Mammary epithelial cell (primary cell): ENCODE measurements at regions of chr12 and their contacts with region 1.

Region 1: GRCh38 chr12:4276524-4277204 is 3.1 kb downstream of the CCND2 start:
- DNase-seq: peak; percentile 76
- H3K4me3 ChIP-seq: peak overlapping the region; percentile 87 to 100 (median 94)
- H3K27ac ChIP-seq: peak overlapping the region; percentile 94
- H3K4me1 ChIP-seq: peaks cover 40% of the 10 kb centered on the region
- H3K27me3 ChIP-seq: no peaks in the 10 kb centered on the region
- CTCF ChIP-seq: peak; percentile 81 to 96

Region 2: DNA sequence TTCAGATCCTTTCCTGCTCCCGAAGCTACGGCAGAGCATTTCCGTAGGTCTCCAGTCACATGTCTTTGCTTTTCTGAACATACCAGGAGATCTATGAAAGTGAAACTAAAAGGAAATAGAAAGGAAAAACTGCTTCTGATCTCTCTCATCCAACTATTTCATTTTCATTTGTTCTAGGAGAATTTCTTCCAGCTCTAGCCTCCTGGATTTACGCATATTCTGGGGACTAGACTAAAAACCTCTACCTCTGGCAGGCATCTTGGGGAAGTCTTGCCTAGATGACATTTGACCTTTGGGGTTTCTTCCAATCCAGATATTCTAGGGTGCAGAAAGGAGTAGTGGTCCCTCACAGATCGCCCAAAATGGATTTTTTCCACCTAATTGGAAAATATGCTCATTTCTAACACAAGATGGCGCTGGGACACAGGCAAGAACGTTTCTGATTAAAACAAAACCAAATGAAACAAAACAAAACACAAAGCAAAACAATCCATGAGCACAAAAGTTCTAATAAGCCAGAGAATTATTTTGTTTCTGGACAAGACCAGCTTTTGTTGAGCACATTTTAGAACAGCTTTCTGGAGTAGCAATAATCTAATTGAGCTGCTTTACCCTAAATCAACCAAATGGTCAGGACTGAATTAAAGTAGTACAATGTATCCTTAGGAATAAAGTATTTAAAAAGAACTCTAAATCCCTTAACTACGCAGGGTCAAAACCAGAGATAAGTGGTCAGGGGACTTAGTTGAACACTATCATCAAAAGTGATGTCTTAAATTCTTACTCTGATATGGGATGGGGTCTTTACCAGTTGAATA is 391.2 kb before region 1 on chr12:
- CTCF ChIA-PET with region 1: interaction called, 17 read pairs
- dilution Hi-C with region 1: no loop called
- in situ Hi-C with region 1: loop called (anchors 10 to 25 kb)
- intact Hi-C with region 1: loop called (anchors 1 kb)
- DNase-seq: peak; percentile 22
- H3K4me3 ChIP-seq: peak overlapping the region in 1 of 3 experiments; percentile 11
- H3K27ac ChIP-seq: no peak overlapping the region
- H3K4me1 ChIP-seq: peaks cover 5% of the 10 kb centered on the region
- H3K27me3 ChIP-seq: peaks cover 3% of the 10 kb centered on the region
- CTCF ChIP-seq: peak; percentile 69 to 81

Region 3: GRCh38 chr12:3998968-3999826 is 277.5 kb before region 1 on chr12:
- CTCF ChIA-PET with region 1: interaction called, 13 read pairs
- dilution Hi-C with region 1: loop called (anchors 10 kb)
- in situ Hi-C with region 1: loop called (anchors 5 to 10 kb)
- intact Hi-C with region 1: loop called (anchors 1 kb)
- DNase-seq: peak; percentile 96
- H3K4me3 ChIP-seq: no peak overlapping the region
- H3K27ac ChIP-seq: peak overlapping the region; percentile 90
- H3K4me1 ChIP-seq: peaks cover 34% of the 10 kb centered on the region
- H3K27me3 ChIP-seq: no peaks in the 10 kb centered on the region
- CTCF ChIP-seq: no peak

Region 4: DNA sequence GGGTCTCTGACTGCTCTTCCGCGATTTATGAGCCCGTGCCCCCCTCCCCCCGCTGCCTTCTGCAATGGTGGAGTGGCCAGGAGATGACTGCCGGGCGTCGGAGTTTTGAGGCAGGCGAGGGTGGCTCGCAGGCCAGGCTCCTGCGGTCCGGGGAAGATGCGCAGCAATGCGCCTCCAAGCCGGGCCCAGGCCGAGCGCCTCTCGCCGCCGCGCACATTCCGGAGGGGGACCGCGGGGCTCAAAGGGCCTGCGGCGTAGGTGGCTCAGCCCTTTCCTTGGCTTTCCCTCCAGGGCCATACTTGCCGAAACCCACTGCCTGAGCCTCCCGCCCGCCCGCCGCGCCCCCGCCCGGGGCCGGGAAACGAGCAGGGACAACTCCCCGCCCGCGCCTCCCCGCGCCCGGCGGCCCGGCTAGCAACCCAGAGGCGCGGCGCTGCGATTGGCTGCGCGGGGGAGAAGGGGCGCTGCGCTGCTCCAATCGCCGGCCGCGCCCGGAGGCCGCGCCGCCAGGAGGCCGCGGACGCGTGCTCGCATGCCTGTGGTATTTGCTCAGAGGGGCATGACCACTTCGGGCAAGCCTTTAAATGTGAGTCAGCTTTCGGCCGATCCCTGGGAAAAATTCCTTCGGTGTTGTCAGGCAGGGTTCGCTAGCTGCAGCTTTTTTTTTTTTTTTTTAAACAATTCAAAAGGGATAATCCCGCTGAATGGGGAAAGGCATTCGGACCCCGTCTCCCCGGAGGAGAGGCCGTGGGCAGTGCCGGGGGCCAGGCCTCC is 245.5 kb before region 1 on chr12:
- CTCF ChIA-PET with region 1: interaction called, 4 read pairs
- dilution Hi-C with region 1: loop called (anchors 5 kb)
- in situ Hi-C with region 1: loop called in 1 of 2 experiments (anchors 5 kb)
- intact Hi-C with region 1: no loop called
- DNase-seq: peak; percentile 99
- H3K4me3 ChIP-seq: peak overlapping the region in 1 of 3 experiments; percentile 25
- H3K27ac ChIP-seq: peak overlapping the region; percentile 91
- H3K4me1 ChIP-seq: peaks cover 42% of the 10 kb centered on the region
- H3K27me3 ChIP-seq: no peaks in the 10 kb centered on the region
- CTCF ChIP-seq: no peak

Region 5: DNA sequence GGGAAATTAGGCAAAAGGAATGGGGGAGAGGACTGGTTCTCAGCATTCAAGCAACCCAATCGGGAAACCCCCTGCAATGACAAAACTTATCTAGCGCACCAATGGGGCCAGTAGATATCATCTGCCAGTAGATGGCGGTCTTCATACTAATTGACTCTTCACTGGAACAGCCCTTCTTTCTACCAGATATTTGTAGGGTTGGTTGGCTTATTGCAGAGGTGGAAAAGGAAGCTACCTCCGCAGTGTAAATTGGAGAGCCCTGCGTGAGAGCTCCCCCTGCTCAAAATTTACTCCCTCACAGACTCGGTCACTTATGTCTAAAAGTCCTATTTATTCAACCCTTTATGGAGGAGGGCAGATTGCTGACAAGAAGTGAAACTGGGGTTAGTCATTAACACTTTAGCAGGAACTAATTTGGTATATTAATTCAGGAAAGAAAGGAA is 169.2 kb before region 1 on chr12:
- CTCF ChIA-PET with region 1: interaction called, 11 read pairs
- dilution Hi-C with region 1: loop called (anchors 5 kb)
- in situ Hi-C with region 1: loop called (anchors 5 kb)
- intact Hi-C with region 1: loop called (anchors 1 kb)
- DNase-seq: peak; percentile 79
- H3K4me3 ChIP-seq: no peak overlapping the region
- H3K27ac ChIP-seq: no peak overlapping the region
- H3K4me1 ChIP-seq: peaks cover 20% of the 10 kb centered on the region
- H3K27me3 ChIP-seq: no peaks in the 10 kb centered on the region
- CTCF ChIP-seq: peak; percentile 78 to 84

Region 6: DNA sequence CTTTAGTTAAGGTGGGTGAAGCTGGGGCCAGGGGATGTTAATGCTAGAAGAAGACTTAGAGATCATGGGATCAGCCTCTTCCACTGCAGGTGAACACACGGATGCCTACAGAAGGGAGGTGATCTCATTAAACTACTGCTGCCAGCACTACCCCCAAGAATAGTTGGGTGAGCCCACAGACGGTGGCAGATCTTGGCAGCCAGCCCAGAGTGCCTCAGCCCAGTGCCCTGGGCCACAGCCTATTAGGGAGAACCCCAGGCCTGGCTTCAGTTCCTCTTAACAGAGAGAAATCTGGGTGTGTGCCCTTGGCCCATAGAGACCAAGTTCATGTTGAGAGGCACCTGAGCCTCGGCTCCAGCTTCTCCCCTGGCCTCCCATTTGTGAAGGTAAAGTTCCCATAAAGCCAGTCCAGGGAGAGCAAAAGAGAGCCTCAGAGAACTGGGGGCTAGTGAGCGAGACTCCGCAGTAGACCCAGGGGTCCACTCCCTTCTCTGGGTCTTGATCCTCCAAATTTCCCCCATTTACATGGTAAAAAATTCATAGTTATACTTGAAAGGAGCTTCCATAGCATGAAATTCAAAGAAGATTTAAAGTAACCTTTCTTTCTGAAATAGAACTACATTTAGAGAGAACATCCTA is 128.1 kb before region 1 on chr12:
- CTCF ChIA-PET with region 1: no interaction called
- dilution Hi-C with region 1: no loop called
- in situ Hi-C with region 1: no loop called
- intact Hi-C with region 1: no loop called
- DNase-seq: peak; percentile 39
- H3K4me3 ChIP-seq: no peak overlapping the region
- H3K27ac ChIP-seq: no peak overlapping the region
- H3K4me1 ChIP-seq: peaks cover 12% of the 10 kb centered on the region
- H3K27me3 ChIP-seq: no peaks in the 10 kb centered on the region
- CTCF ChIP-seq: no peak

Region 7: DNA sequence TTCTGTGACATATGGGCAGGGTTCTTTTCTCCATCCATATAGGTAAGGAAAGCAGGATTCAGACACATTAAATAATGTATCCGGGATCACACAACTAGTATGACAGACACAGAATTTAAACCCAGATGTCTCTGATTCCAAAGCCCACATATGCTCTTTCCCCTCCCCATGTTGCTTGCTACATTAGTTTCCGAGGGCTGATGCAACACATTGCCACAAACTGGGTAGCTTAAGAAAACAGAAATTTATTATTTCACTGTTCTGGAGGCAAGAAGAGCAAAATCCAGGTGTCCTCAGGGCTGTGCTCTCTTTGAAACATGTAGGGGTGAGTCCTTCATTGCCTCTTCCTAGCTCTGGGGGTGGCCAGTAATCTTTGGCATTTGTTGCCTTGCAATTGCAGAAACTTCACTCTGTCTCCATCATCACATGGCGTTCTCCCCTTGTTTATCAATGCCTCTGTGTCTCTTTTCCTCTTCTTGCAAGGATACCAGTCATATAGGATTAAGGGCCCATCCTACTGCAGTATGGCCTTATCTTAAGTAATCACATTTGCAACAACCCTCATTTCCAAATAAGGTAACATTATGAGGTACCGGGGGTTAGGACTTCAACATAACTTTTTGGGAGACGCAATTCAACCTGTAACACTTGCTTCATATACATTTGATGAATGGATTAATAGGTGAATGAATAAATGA is 86.1 kb before region 1 on chr12:
- CTCF ChIA-PET with region 1: interaction called, 12 read pairs
- dilution Hi-C with region 1: no loop called
- in situ Hi-C with region 1: no loop called
- intact Hi-C with region 1: no loop called
- DNase-seq: no peak
- H3K4me3 ChIP-seq: no peak overlapping the region
- H3K27ac ChIP-seq: no peak overlapping the region
- H3K4me1 ChIP-seq: no peaks in the 10 kb centered on the region
- H3K27me3 ChIP-seq: peaks cover 2% of the 10 kb centered on the region
- CTCF ChIP-seq: no peak

Region 8: GRCh38 chr12:4370265-4370664 is 93.6 kb after region 1 on chr12:
- CTCF ChIA-PET with region 1: no interaction called
- dilution Hi-C with region 1: no loop called
- in situ Hi-C with region 1: no loop called
- intact Hi-C with region 1: no loop called
- DNase-seq: no peak
- H3K4me3 ChIP-seq: no peak overlapping the region
- H3K27ac ChIP-seq: no peak overlapping the region
- H3K4me1 ChIP-seq: no peaks in the 10 kb centered on the region
- H3K27me3 ChIP-seq: no peaks in the 10 kb centered on the region
- CTCF ChIP-seq: no peak